Activated B cell treated with CpG ODN at 0.5 μM for 24 hours (primary cell): ENCODE measurements at regions of chr6 and their contacts with region 1.

Region 1: GRCh38 chr6:69796642-69797390 is at the start of gene LMBRD1:
- DNase-seq: peak; percentile 100
- ATAC-seq: peak; percentile 81
- H3K4me3 Mint-ChIP-seq: peak within 1 kb of the TSS; percentile 95
- H3K27ac Mint-ChIP-seq: peak within 1 kb of the TSS; percentile 97
- H3K4me1 Mint-ChIP-seq: peaks cover 47% of the 10 kb centered on the region
- H3K27me3 Mint-ChIP-seq: no peaks in the 10 kb centered on the region
- CTCF ChIP-seq: peak; percentile 53
- total RNA-seq, gene LMBRD1: 46.9 and 51.3 TPM in 2 replicates

Region 2: DNA sequence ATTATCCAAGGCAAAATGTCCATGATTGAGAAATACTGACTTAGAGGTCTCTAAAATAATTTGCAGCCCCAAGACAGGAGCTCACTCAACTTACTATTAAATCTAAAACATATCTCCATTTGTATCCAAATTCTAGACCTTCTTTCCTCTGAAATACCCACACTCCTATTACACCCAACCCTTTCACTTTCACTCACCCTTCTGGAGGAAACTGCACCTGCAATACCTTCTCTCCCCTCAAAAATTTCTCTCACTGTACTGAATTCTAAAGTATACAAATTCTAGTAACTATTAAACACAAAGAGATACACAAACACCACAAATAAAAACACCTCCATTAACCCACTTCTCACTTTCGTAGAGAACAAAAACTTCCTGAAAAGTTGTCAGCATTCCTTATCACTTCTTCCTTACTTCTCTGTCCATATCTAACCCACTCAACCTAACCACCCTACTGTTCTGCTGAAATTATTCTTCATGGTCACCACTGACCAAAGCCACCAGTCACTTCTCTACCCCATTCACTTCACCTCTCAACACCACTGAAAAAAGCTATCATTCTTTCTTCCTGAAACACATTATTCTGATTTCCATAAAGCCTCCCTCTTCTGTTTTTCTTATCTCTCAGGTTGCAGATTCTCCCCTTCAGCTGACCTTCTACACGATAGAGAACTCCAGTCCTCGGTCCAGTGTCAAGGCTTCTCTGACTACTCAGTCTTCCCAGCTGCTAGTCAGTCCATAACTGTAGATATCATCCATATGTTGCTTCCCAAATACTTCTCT is 12.0 kb before region 1 on chr6:
- CTCF ChIA-PET with region 1: interaction called, 3 read pairs
- POLR2A ChIA-PET with region 1: interaction called, 14 read pairs
- intact Hi-C with region 1: loop called (anchors 1 kb)
- DNase-seq: no peak
- ATAC-seq: peak; percentile 64
- H3K4me3 Mint-ChIP-seq: peak overlapping the region; percentile 1
- H3K27ac Mint-ChIP-seq: peak overlapping the region; percentile 42
- H3K4me1 Mint-ChIP-seq: peaks cover 74% of the 10 kb centered on the region
- H3K27me3 Mint-ChIP-seq: no peaks in the 10 kb centered on the region
- CTCF ChIP-seq: no peak

Region 3: GRCh38 chr6:69827276-69827893 is 30.6 kb after region 1 on chr6:
- CTCF ChIA-PET with region 1: interaction called, 3 read pairs
- POLR2A ChIA-PET with region 1: interaction called, 11 read pairs
- intact Hi-C with region 1: no loop called
- DNase-seq: no peak
- ATAC-seq: no peak
- H3K4me3 Mint-ChIP-seq: no peak overlapping the region
- H3K27ac Mint-ChIP-seq: no peak overlapping the region
- H3K4me1 Mint-ChIP-seq: no peaks in the 10 kb centered on the region
- H3K27me3 Mint-ChIP-seq: no peaks in the 10 kb centered on the region
- CTCF ChIP-seq: no peak

Region 4: DNA sequence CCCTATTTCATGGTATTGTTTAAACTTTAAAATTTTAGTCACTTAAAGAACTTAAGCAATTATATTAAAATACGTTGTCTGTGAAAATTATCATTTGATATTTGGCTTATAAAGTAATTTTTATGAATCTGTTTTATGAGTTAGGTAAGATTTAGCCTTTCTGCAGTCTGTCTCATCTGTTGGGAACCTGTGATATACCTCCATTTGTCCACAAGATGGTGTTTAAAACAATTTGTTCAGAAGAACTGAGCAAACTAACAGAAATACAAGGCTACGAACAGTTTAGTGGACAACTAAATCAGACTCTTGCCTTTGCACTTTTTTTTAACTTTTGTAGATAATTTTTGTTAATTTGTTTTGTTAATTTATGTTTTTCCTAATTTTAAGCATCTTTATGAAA is 413.6 kb after region 1 on chr6:
- CTCF ChIA-PET with region 1: no interaction called
- POLR2A ChIA-PET with region 1: interaction called, 11 read pairs
- intact Hi-C with region 1: no loop called
- DNase-seq: no peak
- ATAC-seq: no peak
- H3K4me3 Mint-ChIP-seq: no peak overlapping the region
- H3K27ac Mint-ChIP-seq: no peak overlapping the region
- H3K4me1 Mint-ChIP-seq: no peaks in the 10 kb centered on the region
- H3K27me3 Mint-ChIP-seq: no peaks in the 10 kb centered on the region
- CTCF ChIP-seq: no peak

Region 5: GRCh38 chr6:70234561-70235236 is 437.9 kb after region 1 on chr6:
- CTCF ChIA-PET with region 1: no interaction called
- POLR2A ChIA-PET with region 1: no interaction called
- intact Hi-C with region 1: no loop called
- DNase-seq: no peak
- ATAC-seq: no peak
- H3K4me3 Mint-ChIP-seq: no peak overlapping the region
- H3K27ac Mint-ChIP-seq: no peak overlapping the region
- H3K4me1 Mint-ChIP-seq: no peaks in the 10 kb centered on the region
- H3K27me3 Mint-ChIP-seq: peaks cover 8% of the 10 kb centered on the region
- CTCF ChIP-seq: no peak

Region 6: GRCh38 chr6:70394518-70395300 is 597.9 kb after region 1 on chr6:
- CTCF ChIA-PET with region 1: no interaction called
- POLR2A ChIA-PET with region 1: no interaction called
- intact Hi-C with region 1: no loop called
- DNase-seq: no peak
- ATAC-seq: no peak
- H3K4me3 Mint-ChIP-seq: no peak overlapping the region
- H3K27ac Mint-ChIP-seq: no peak overlapping the region
- H3K4me1 Mint-ChIP-seq: no peaks in the 10 kb centered on the region
- H3K27me3 Mint-ChIP-seq: peaks cover 31% of the 10 kb centered on the region
- CTCF ChIP-seq: no peak

Region 7: GRCh38 chr6:70667711-70668498 is 871.1 kb after region 1 on chr6 and contains the start of gene SMAP1:
- CTCF ChIA-PET with region 1: no interaction called
- POLR2A ChIA-PET with region 1: no interaction called
- intact Hi-C with region 1: loop called (anchors 5 kb)
- DNase-seq: peak; percentile 94
- ATAC-seq: peak; percentile 96
- H3K4me3 Mint-ChIP-seq: peak within 1 kb of the TSS; percentile 85
- H3K27ac Mint-ChIP-seq: peak within 1 kb of the TSS; percentile 92
- H3K4me1 Mint-ChIP-seq: peaks cover 41% of the 10 kb centered on the region
- H3K27me3 Mint-ChIP-seq: no peaks in the 10 kb centered on the region
- CTCF ChIP-seq: no peak
- total RNA-seq, gene SMAP1: 20.7 and 21.6 TPM in 2 replicates